Activated CD4-positive, alpha-beta T cell treated with anti-CD3 and anti-CD28 coated beads, Interleukin-2, amount 10 ng/mL, durations not matched to agents 24 days and 14 days (primary cell): ENCODE measurements at regions of chr12 and their contacts with region 1.

Region 1: DNA sequence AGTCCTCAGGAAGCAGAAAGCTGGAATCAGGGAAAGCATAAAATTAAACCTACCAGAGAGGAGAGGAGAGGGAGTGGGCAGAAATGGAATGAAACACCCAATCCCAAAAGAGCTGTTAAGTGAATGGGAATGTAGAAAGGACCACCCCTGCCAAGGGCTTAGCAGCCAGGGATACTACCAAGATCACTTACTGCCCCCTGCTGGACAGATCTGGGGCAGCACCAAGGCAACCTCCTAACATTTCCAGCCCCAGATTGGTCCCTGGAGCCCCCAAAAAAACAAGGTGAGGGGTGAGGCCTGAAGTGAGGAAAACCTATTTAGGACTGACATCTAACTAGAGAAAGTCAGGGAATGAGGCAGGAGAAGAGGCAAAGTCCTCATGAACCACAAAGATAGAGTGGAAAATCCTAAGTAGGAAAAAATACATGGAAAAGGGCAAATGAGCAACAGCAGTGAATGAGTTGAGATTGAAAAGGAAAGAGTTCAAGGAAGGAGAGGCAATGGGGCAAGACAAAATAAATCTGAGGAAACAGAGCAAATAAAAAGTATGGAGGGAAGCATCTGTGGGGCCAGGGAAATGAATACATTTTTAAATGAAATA is 11.2 kb upstream of the FKBP11 start:
- DNase-seq: peak; percentile 94
- H3K4me3 Mint-ChIP-seq: no peak overlapping the region
- H3K27ac Mint-ChIP-seq: peak overlapping the region; percentile 39
- H3K4me1 Mint-ChIP-seq: peaks cover 24% of the 10 kb centered on the region
- H3K27me3 Mint-ChIP-seq: no peaks in the 10 kb centered on the region

Region 2: GRCh38 chr12:48903982-48904411 is 32.5 kb before region 1 on chr12:
- intact Hi-C with region 1: loop called (anchors 2 kb)
- DNase-seq: peak; percentile 94
- H3K4me3 Mint-ChIP-seq: peak overlapping the region; percentile 74
- H3K27ac Mint-ChIP-seq: peak overlapping the region; percentile 29
- H3K4me1 Mint-ChIP-seq: peaks cover 12% of the 10 kb centered on the region
- H3K27me3 Mint-ChIP-seq: peaks cover 6% of the 10 kb centered on the region

Region 3: GRCh38 chr12:49014547-49014946 is 78.1 kb after region 1 on chr12:
- intact Hi-C with region 1: no loop called
- DNase-seq: no peak
- H3K4me3 Mint-ChIP-seq: no peak overlapping the region
- H3K27ac Mint-ChIP-seq: no peak overlapping the region
- H3K4me1 Mint-ChIP-seq: peaks cover 21% of the 10 kb centered on the region
- H3K27me3 Mint-ChIP-seq: no peaks in the 10 kb centered on the region

Region 4: DNA sequence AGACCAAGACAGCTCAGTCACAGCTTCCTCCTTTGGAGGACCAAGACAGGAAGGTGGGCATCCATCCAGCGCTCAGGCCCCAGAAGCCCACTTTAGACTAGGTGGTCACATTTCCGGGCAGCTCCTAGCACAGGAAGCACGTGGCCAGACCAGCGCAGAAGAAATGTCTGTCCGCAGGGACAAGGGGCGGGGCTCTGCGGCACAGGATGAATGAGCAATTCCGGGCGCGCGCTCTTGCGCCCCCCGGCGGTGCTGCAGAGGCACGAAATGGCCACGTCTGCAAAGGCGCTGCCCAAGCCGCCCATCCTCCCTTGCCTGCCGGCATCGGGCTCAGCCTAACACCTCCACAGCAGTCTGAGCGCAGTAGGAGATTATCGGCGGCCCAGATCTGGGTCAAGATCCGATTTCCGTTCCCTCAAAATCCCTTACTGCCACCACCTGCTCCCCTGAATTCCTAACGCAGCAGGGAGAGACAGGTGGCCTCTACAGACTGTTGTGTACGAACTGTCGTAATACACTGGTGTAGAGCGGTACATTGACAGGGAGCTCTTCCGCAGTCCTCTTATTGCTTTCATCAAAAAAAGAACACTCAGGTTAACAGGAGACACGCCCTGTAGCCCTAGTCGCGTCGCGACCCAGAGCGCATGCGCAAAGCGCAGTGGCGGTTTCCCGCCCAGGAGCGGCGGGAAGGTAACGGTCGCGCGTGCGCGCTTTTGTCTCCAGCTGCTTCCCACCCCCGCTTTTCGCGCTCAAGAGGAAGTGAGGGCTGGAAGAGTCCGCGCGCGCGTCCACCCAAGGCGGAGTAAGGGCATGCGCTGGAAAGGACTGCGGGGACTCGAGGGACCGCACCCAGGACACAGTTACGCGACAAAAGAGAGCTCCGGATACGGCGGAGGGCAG is 193.9 kb after region 1 on chr12:
- intact Hi-C with region 1: no loop called
- DNase-seq: peak; percentile 98
- H3K4me3 Mint-ChIP-seq: peak overlapping the region; percentile 98
- H3K27ac Mint-ChIP-seq: peak overlapping the region; percentile 99
- H3K4me1 Mint-ChIP-seq: peaks cover 36% of the 10 kb centered on the region
- H3K27me3 Mint-ChIP-seq: peaks cover 2% of the 10 kb centered on the region